ENCODE measurements at regions of chr6 and their contacts with region 1.

Region 1: DNA sequence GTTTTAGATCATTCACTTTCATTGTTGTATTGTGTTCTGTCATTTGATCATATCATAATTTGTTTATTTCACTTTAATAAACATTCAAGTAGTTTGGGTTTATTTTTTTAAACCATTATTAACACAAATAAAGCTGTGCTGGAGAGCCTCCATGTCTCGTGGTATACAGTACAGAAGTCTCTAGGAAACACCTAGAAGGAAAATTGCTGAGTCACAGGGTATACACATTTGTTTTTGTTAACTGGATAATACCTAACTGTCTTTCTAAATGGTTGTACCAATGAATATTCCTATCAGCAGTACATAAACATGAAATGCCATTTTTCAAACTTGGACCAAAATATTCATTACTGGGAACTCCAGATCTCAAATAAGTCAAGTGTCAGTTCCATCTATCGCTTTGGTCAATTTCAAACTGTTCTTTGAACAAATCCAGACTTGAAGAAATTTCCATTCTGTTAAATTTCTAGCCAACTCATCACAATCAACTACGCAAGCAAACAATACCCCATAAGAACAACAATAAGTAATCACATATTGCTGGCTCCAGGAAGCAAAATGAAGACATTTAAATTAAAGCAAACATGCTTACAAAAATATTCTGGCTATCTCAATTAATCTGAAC is 138.1 kb downstream of the ATXN1 start:
- DNase-seq: peak; percentile 60
- ATAC-seq: peak; percentile 50; the same call in 1 of the 2 replicates
- H3K4me3 ChIP-seq: no peak overlapping the region
- H3K27ac ChIP-seq: no peak overlapping the region
- H3K4me1 ChIP-seq: no peaks in the 10 kb centered on the region; the same call in none of the 2 replicates
- H3K27me3 ChIP-seq: no peaks in the 10 kb centered on the region
- CTCF ChIP-seq: no peak
- POLR2A ChIP-seq: no peak
- RAD21 ChIP-seq: no peak

Region 2: DNA sequence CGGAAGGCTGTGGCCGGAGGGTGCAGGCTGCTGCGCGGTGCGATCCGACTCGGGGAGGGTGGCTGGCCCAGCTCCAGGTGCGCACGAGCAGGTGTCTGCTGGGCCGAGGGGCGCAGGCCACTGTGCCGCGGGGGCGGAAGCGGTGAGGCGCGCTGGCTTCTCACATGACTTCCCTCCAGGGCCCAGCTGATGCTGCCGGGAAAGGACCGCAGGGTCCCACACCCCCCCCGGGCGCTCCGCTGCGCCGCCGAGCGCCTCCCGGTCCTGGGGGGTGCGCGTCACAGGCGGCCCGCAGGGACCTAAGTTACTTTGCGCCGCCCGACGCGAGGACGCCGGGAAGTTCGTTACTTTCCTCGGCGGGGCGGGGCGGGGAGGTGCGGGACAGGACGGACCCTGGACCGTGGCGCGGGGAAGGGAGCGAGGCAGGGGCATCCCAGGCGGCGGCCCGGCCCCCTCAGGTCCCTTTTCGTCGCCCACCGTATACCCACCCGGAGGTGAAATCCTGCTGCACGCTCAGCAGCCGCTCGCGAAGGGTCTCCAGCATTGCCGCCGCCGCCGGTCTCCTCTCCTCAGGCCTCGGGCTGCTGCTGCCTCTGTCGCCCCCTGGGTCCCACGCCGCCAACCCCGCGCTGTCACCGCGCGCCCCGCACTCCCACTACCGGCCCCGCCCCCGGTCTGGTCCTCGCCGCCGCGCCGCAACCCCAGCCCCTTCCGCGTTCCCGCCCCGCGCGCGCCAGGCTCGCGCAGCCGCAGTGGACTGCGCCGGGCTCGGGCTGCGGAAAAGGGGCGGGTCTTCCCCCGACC is 960.6 kb before region 1 on chr6 and contains the start of gene DTNBP1:
- CTCF ChIA-PET with region 1: no interaction called
- POLR2A ChIA-PET with region 1: no interaction called
- dilution Hi-C with region 1: no loop called
- in situ Hi-C with region 1: no loop called
- intact Hi-C with region 1: no loop called
- DNase-seq: peak; percentile 57
- ATAC-seq: peak; percentile 97
- H3K4me3 ChIP-seq: peak within 1 kb of the TSS; percentile 93
- H3K27ac ChIP-seq: peak within 1 kb of the TSS; percentile 8; the same call in 1 of the 2 replicates
- H3K4me1 ChIP-seq: peaks cover 2% of the 10 kb centered on the region; the same call in 1 of the 2 replicates
- H3K27me3 ChIP-seq: peaks cover 7% of the 10 kb centered on the region
- CTCF ChIP-seq: no peak
- POLR2A ChIP-seq: no peak
- RAD21 ChIP-seq: no peak
- total RNA-seq, gene DTNBP1: 4.7 and 4.8 TPM in 2 replicates

Region 3: DNA sequence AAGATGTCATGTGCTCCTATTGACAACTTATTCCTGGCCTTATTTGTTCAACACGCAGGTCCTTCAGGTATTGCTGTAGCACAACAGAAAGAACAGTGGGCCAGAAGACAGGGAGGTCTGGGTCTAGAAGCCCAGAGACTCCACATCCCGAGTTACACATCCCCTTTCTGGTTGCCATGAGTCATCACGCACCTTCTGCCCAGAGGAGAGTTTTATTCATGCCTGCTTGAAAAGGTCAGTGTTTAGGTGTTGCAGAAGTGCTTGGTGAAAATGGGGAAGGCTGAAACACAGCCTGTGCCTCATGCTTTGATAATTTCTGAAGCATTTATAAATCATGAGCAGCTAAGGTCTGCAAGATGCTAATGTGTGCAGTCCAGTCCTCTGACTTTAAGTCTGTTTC is 128.3 kb before region 1 on chr6:
- CTCF ChIA-PET with region 1: no interaction called
- POLR2A ChIA-PET with region 1: no interaction called
- dilution Hi-C with region 1: no loop called
- in situ Hi-C with region 1: no loop called
- intact Hi-C with region 1: no loop called
- DNase-seq: peak; percentile 31
- ATAC-seq: no peak
- H3K4me3 ChIP-seq: no peak overlapping the region
- H3K27ac ChIP-seq: no peak overlapping the region
- H3K4me1 ChIP-seq: peaks cover 8% of the 10 kb centered on the region
- H3K27me3 ChIP-seq: no peaks in the 10 kb centered on the region
- CTCF ChIP-seq: no peak
- POLR2A ChIP-seq: no peak
- RAD21 ChIP-seq: no peak

Region 4: DNA sequence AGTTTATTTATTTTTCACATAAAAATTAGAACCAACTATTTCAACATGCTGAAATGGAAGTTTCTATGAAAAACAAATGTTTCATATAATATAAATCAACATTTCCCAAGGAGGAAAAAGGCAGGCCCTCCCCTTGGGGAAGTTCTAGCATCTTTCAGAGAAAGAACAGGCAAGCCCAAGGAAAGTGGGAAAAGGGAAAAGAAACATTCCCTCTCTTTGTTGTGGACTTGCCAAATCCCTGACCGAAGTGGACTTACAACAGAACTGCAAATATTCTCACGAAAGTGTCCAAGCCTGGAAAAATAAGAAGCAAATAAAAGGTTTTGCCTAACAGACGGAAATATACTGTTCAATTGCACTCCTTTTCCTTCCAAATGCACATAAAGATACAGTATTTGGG is 76.3 kb before region 1 on chr6:
- CTCF ChIA-PET with region 1: interaction called, 10 read pairs
- POLR2A ChIA-PET with region 1: no interaction called
- dilution Hi-C with region 1: no loop called
- in situ Hi-C with region 1: no loop called
- intact Hi-C with region 1: no loop called
- DNase-seq: no peak
- ATAC-seq: no peak
- H3K4me3 ChIP-seq: no peak overlapping the region
- H3K27ac ChIP-seq: no peak overlapping the region
- H3K4me1 ChIP-seq: peaks cover 3% of the 10 kb centered on the region
- H3K27me3 ChIP-seq: no peaks in the 10 kb centered on the region
- CTCF ChIP-seq: no peak
- POLR2A ChIP-seq: no peak
- RAD21 ChIP-seq: no peak

Region 5: DNA sequence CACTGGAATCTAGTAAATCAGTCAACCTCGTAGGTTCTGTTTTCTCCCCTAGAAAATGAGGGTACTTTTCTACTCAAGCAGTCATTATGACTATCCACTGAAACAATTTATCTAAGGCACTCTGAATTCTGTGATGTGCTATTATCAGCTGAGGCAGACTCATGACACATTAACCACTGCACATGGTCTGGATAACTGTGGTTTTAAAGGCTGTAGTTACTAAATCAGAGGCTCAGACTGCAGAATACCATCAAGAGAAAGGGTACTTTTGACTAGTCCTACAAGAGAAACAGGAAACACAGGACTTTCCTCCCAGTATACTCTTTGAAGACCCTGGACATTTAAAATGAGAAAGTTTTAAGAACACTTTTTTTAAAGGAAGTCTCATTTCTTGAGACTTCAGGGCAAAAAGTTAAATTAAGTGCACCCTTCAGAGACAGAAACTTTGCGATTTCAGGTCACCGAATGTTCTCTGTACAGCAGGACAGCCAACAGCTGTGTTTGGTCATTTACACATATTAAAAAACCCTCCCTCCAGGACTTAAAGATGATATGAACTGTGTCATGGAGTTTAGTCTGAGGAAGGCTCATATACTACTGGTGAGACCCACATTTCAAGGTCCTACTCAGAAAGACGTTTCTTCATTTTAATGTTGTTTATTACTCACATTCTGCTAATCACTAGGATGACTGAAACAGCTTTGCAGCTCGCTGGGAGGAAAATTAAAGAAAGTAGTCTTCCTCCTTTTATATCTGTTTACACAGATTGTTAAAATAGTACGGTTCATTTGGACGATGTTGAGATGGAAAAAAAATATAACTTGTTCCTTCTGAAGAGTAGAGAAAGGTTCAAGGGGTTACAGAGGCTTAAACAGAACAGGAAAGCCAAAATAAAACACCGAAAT is 118.2 kb after region 1 on chr6:
- CTCF ChIA-PET with region 1: no interaction called
- POLR2A ChIA-PET with region 1: no interaction called
- dilution Hi-C with region 1: no loop called
- in situ Hi-C with region 1: no loop called
- intact Hi-C with region 1: no loop called
- DNase-seq: peak; percentile 98
- ATAC-seq: peak; percentile 88
- H3K4me3 ChIP-seq: peak overlapping the region; percentile 27; the same call in 1 of the 2 replicates
- H3K27ac ChIP-seq: no peak overlapping the region; the same call in 1 of the 2 replicates
- H3K4me1 ChIP-seq: peaks cover 22% of the 10 kb centered on the region
- H3K27me3 ChIP-seq: no peaks in the 10 kb centered on the region
- CTCF ChIP-seq: no peak
- POLR2A ChIP-seq: peak; percentile 68; the same call in 1 of the 2 replicates
- RAD21 ChIP-seq: no peak

Region 6: GRCh38 chr6:16752236-16752867 is 129.2 kb after region 1 on chr6:
- CTCF ChIA-PET with region 1: no interaction called
- POLR2A ChIA-PET with region 1: no interaction called
- dilution Hi-C with region 1: no loop called
- in situ Hi-C with region 1: no loop called
- intact Hi-C with region 1: no loop called
- DNase-seq: peak; percentile 94
- ATAC-seq: peak; percentile 87
- H3K4me3 ChIP-seq: no peak overlapping the region
- H3K27ac ChIP-seq: no peak overlapping the region
- H3K4me1 ChIP-seq: peaks cover 15% of the 10 kb centered on the region
- H3K27me3 ChIP-seq: no peaks in the 10 kb centered on the region
- CTCF ChIP-seq: no peak
- POLR2A ChIP-seq: no peak
- RAD21 ChIP-seq: peak; percentile 20; the same call in 1 of the 2 replicates

Measured in IMR-90 (cell line).